Activated CD8-positive, alpha-beta T cell treated with anti-CD3 and anti-CD28 coated beads, Interleukin-2, amount 10 ng/mL, durations not matched to agents 7 days and 5 days (primary cell): ENCODE measurements at regions of chr5 and their contacts with region 1.

Region 1: DNA sequence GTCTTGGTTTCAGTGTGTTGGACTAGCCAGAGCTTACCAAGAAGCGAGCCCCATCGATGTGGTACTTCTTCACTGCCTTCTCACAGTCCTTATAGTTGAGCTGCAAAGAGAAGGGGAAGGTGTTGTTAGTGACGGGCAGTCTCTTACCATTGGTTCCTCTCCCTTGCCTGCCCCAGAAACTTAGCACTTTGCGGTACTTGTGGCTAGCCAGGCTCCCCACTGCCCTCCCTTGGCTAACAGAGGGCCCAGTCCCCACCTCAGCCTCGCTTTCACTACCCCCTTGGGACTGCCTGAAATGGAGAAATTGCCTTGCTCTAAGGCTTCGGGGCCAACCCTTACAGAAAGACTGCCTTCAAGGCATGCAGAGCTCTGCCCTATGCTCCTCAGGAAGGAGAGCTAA is 4.3 kb downstream of the LCP2 start:
- DNase-seq: peak; percentile 92
- ATAC-seq: peak; percentile 61
- H3K4me3 Mint-ChIP-seq: peak overlapping the region; percentile 96
- H3K27ac Mint-ChIP-seq: peak overlapping the region; percentile 93
- H3K4me1 Mint-ChIP-seq: peaks cover 64% of the 10 kb centered on the region
- H3K27me3 Mint-ChIP-seq: no peaks in the 10 kb centered on the region

Region 2: GRCh38 chr5:170111088-170111785 is 182.0 kb before region 1 on chr5:
- CTCF ChIA-PET with region 1: no interaction called
- POLR2A ChIA-PET with region 1: no interaction called
- DNase-seq: no peak
- ATAC-seq: no peak
- H3K4me3 Mint-ChIP-seq: no peak overlapping the region
- H3K27ac Mint-ChIP-seq: no peak overlapping the region
- H3K4me1 Mint-ChIP-seq: no peaks in the 10 kb centered on the region
- H3K27me3 Mint-ChIP-seq: no peaks in the 10 kb centered on the region

Region 3: GRCh38 chr5:170262061-170263045 is 30.9 kb before region 1 on chr5:
- CTCF ChIA-PET with region 1: interaction called, 201 read pairs
- POLR2A ChIA-PET with region 1: interaction called, 898 read pairs
- DNase-seq: peak; percentile 82
- ATAC-seq: peak; percentile 68
- H3K4me3 Mint-ChIP-seq: peak overlapping the region; percentile 70
- H3K27ac Mint-ChIP-seq: peak overlapping the region; percentile 95
- H3K4me1 Mint-ChIP-seq: peaks cover 99% of the 10 kb centered on the region
- H3K27me3 Mint-ChIP-seq: no peaks in the 10 kb centered on the region

Region 4: DNA sequence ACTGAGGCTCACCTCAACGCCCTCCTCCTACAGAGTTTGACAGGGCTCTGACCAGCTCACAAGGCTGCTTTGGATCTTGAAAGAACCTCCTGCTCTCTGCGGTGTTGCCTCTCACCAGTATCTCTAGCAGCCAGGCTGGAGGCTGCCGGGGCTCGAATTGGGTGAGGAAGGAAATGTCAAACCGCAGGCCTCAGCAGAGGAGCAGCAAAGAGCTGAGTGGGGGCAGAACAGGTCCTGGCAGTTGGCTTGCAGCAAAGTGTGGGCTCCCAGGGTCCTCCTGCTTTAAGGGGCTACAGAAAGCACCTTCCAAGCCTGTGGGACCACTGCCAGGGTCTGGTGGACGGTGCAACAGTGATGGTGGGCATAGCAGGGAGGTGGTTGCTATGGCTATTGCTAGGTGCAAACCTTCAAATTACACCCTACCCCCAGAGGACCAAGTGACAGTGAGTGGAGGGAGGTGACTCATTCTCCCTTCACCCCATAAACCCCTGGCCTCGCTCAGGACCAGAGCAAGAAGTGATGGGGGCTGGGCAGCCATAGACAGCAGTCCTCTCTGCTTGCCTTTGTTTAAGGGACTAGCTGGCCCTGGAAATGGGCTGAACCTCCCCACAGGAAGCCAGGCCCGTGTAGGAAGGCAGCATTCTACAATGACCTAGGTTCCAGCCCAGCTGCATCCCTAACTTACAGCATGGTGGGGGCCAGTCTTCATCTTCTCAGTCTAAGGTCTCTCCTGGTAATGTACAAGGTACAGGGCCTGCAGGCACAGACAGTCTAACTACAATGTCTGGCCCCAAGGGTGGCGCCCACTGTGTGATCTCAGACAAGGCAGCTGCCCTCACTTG is 14.4 kb before region 1 on chr5:
- CTCF ChIA-PET with region 1: interaction called, 324 read pairs
- POLR2A ChIA-PET with region 1: interaction called, 898 read pairs
- DNase-seq: peak; percentile 97
- ATAC-seq: peak; percentile 77
- H3K4me3 Mint-ChIP-seq: peak overlapping the region; percentile 72
- H3K27ac Mint-ChIP-seq: peak overlapping the region; percentile 94
- H3K4me1 Mint-ChIP-seq: peaks cover 94% of the 10 kb centered on the region
- H3K27me3 Mint-ChIP-seq: no peaks in the 10 kb centered on the region

Region 5: DNA sequence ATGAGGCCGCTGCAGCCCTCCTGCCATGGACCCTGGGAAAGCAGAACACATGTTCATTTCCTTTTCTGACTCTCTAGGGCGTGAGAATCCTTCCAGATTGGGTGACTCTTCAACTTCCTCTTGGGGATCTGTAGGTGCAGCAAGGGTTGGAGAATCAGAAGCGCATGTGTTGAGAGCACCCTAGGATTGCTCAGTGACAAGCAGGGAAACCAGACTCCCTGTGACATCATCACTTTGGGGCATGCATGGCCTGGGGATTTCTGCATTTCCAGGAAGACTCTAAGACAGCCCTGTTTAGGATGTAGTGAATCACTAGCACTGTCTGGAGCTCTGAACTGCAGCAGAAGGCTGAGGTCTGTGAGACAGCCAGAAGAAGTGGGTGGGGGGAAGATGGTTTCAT is 19.4 kb after region 1 on chr5:
- CTCF ChIA-PET with region 1: interaction called, 21 read pairs
- POLR2A ChIA-PET with region 1: interaction called, 58 read pairs
- DNase-seq: peak; percentile 55
- ATAC-seq: peak; percentile 81
- H3K4me3 Mint-ChIP-seq: peak overlapping the region; percentile 35
- H3K27ac Mint-ChIP-seq: peak overlapping the region; percentile 39
- H3K4me1 Mint-ChIP-seq: peaks cover 41% of the 10 kb centered on the region
- H3K27me3 Mint-ChIP-seq: no peaks in the 10 kb centered on the region

Region 6: GRCh38 chr5:170941788-170942187 is 648.5 kb after region 1 on chr5:
- CTCF ChIA-PET with region 1: no interaction called
- POLR2A ChIA-PET with region 1: no interaction called
- DNase-seq: no peak
- ATAC-seq: no peak
- H3K4me3 Mint-ChIP-seq: no peak overlapping the region
- H3K27ac Mint-ChIP-seq: no peak overlapping the region
- H3K4me1 Mint-ChIP-seq: no peaks in the 10 kb centered on the region
- H3K27me3 Mint-ChIP-seq: no peaks in the 10 kb centered on the region